ENCODE measurements at regions of chr13 and their contacts with region 1.

Region 1: DNA sequence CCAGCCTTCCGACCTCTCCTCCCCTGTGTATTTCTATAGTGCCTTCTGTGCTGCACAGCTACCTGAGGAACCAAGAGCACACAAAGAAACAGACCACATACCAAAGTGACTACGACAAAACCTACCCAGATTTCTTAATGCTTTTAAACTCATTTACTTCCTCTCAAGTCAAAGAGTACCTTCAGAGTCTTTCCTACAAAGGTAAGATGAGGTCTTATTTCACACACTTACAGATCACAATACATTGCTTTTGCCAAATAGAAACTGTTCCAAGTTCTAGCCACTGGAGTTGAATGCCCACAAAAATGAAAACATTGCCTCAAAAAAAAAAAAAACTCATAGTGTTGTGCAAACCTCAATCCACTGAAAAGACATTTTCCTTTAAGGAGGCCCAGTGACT is 36.4 kb downstream of the TEX26 start:
- DNase-seq: no peak
- ATAC-seq: no peak
- H3K4me3 Mint-ChIP-seq: no peak overlapping the region
- H3K27ac Mint-ChIP-seq: no peak overlapping the region
- H3K4me1 Mint-ChIP-seq: no peaks in the 10 kb centered on the region
- H3K27me3 Mint-ChIP-seq: peaks cover 35% of the 10 kb centered on the region
- CTCF ChIP-seq: no peak

Region 2: DNA sequence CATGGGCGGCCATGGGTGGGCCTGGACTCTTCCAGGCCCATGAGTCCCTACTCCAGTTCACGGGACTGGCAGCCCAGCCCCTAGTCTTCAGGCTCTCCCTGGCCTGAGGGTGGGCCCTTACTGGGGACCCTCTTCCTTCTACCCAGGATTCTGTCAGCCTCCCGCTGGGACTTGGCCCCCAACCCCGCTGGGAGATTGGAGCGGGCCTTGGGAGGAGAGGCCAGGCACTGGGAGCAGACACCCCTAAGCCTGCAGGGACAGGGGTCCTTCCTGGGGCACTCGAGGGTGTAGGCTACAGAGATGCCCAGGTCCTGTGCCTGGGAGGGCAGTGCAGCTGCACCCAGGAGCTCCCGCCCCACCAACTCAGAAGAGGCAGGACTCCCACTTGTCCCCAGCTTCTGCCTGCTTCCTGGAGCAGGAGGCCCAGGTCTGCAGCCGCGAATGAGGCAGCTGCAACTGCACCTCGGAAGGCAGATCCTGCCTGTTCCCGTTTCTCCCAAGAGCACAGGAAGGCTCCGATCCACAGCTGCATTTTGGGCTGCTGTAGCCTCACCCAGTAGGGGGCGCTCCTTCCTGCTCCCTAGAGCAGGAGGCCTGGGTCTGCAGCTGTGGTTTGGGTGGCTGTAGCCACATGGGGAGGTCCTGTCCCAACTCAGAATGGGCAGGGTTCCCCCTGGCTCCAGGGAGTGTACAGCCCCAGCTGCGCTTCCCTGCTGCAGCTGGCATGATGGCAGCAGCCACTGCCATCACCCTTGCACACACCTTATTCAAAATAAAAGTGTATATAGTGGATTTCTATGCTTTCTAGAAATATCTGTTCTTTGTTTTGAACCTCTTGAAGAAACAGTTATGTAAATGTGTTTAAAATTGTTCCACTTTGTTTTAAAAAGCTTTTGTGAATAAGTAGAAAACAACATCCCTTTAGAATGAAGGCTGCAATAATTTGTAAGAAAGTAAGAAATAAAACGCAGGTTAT is 10.4 kb after region 1 on chr13:
- CTCF ChIA-PET with region 1: interaction called, 18 read pairs
- POLR2A ChIA-PET with region 1: no interaction called
- intact Hi-C with region 1: no loop called
- DNase-seq: peak; percentile 61
- ATAC-seq: no peak
- H3K4me3 Mint-ChIP-seq: no peak overlapping the region
- H3K27ac Mint-ChIP-seq: no peak overlapping the region
- H3K4me1 Mint-ChIP-seq: no peaks in the 10 kb centered on the region
- H3K27me3 Mint-ChIP-seq: peaks cover 10% of the 10 kb centered on the region
- CTCF ChIP-seq: peak; percentile 86

Measured in activated CD8-positive, alpha-beta T cell treated with anti-CD3 and anti-CD28 coated beads for 36 hours (primary cell).